Right cardiac atrium (tissue), 5 donors: ENCODE measurements at regions of chr14 and their contacts with region 1.

Region 1: DNA sequence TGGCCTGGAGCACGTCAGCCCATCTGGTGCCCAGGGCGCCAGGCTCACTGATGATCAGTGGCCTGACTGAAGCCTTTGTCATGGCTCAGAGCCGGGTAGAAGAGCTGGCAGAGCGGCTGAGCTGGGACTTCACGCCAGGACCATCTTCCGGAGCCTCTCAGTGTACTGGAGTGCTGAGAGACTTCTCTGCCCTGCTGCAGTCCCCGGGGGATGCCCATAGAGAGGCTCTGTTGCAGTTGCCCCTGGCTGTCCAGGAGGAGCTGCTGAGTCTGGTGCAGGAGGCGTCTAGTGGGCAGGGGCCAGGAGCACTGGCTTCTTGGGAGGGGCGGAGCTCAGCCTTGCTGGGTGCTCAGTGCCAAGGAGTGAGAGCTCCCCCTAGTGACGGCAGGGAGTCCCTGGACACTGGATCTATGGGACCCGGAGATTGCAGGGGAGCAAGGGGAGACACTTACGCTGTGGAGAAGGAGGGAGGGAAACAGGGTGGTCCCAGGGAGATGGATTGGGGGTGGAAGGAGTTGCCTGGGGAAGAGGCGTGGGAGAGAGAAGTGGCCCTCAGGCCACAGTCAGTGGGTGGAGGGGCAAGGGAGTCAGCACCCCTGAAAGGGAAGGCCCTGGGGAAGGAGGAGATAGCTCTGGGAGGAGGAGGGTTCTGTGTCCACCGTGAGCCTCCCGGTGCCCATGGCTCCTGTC is 2.0 kb downstream of the KHNYN start:
- DNase-seq: peak; percentile 94 to 96 (median 95)
- ATAC-seq: peak; percentile 70 to 75
- H3K4me3 ChIP-seq: no peak overlapping the region
- H3K27ac ChIP-seq: no peak overlapping the region
- H3K4me1 ChIP-seq: no peaks in the 10 kb centered on the region
- H3K27me3 ChIP-seq: no peaks in the 10 kb centered on the region

Region 2: GRCh38 chr14:24067145-24068082 is 364.3 kb before region 1 on chr14:
- intact Hi-C with region 1: no loop called
- DNase-seq: no peak
- ATAC-seq: no peak
- H3K4me3 ChIP-seq: no peak overlapping the region
- H3K27ac ChIP-seq: no peak overlapping the region
- H3K4me1 ChIP-seq: no peaks in the 10 kb centered on the region
- H3K27me3 ChIP-seq: no peaks in the 10 kb centered on the region

Region 3: GRCh38 chr14:24332268-24332993 is 99.3 kb before region 1 on chr14:
- intact Hi-C with region 1: loop called (anchors 2 to 5 kb)
- DNase-seq: peak; percentile 72 to 84 (median 79)
- ATAC-seq: peak; percentile 32 to 48
- H3K4me3 ChIP-seq: peak overlapping the region; percentile 2
- H3K27ac ChIP-seq: no peak overlapping the region
- H3K4me1 ChIP-seq: no peaks in the 10 kb centered on the region
- H3K27me3 ChIP-seq: no peaks in the 10 kb centered on the region

Region 4: GRCh38 chr14:24366721-24367513 is 64.8 kb before region 1 on chr14:
- intact Hi-C with region 1: loop called (anchors 2 to 10 kb)
- DNase-seq: peak; percentile 93 to 97 (median 96)
- ATAC-seq: peak; percentile 87 to 88
- H3K4me3 ChIP-seq: peak overlapping the region; percentile 83
- H3K27ac ChIP-seq: peak overlapping the region; percentile 95
- H3K4me1 ChIP-seq: no peaks in the 10 kb centered on the region
- H3K27me3 ChIP-seq: no peaks in the 10 kb centered on the region